ENCODE measurements at regions of chr11 and their contacts with region 1.

Region 1: GRCh38 chr11:59560702-59561469 is 49.5 kb downstream of the OR4D9 start:
- DNase-seq: peak; percentile 79
- H3K4me3 Mint-ChIP-seq: peak overlapping the region; percentile 82
- H3K27ac Mint-ChIP-seq: peak overlapping the region; percentile 88
- H3K4me1 Mint-ChIP-seq: peaks cover 54% of the 10 kb centered on the region
- H3K27me3 Mint-ChIP-seq: peaks cover 13% of the 10 kb centered on the region

Region 2: GRCh38 chr11:59550368-59550841 is 10.5 kb before region 1 on chr11:
- CTCF ChIA-PET with region 1: interaction called, 15 read pairs
- POLR2A ChIA-PET with region 1: no interaction called
- DNase-seq: peak; percentile 86
- H3K4me3 Mint-ChIP-seq: peak overlapping the region; percentile 83
- H3K27ac Mint-ChIP-seq: peak overlapping the region; percentile 93
- H3K4me1 Mint-ChIP-seq: peaks cover 37% of the 10 kb centered on the region
- H3K27me3 Mint-ChIP-seq: peaks cover 6% of the 10 kb centered on the region

Measured in activated CD4-positive, alpha-beta T cell treated with anti-CD3 and anti-CD28 coated beads, Interleukin-2, amount 10 ng/mL, durations not matched to agents 7 days and 5 days (primary cell).